MCF 10A (cell line): ENCODE measurements at regions of chr6 and their contacts with region 1.

Region 1: DNA sequence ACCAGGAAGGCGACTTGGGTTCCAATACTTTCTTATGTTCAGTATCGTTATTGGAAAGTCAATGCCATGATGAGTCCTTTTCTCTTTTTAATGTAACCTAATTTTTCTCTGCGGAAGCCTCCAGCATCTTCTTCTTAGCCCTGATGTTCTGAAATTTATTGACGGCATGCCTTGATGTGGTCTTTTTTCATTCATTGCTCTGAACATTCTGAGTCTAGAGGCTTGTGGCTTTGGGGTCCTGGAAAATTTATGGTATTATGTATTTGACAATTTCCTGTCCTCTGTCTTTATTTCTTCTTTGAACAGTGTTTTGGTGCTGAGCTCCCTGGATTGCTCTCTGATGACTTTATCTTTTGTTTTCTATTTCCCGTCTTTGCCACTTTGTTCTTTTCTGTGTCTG is 28.7 kb upstream of the MAS1 start:
- DNase-seq: no peak
- H3K4me3 Mint-ChIP-seq: no peak overlapping the region
- H3K27ac Mint-ChIP-seq: no peak overlapping the region
- H3K4me1 Mint-ChIP-seq: no peaks in the 10 kb centered on the region
- H3K27me3 Mint-ChIP-seq: no peaks in the 10 kb centered on the region
- CTCF ChIP-seq: no peak

Region 2: DNA sequence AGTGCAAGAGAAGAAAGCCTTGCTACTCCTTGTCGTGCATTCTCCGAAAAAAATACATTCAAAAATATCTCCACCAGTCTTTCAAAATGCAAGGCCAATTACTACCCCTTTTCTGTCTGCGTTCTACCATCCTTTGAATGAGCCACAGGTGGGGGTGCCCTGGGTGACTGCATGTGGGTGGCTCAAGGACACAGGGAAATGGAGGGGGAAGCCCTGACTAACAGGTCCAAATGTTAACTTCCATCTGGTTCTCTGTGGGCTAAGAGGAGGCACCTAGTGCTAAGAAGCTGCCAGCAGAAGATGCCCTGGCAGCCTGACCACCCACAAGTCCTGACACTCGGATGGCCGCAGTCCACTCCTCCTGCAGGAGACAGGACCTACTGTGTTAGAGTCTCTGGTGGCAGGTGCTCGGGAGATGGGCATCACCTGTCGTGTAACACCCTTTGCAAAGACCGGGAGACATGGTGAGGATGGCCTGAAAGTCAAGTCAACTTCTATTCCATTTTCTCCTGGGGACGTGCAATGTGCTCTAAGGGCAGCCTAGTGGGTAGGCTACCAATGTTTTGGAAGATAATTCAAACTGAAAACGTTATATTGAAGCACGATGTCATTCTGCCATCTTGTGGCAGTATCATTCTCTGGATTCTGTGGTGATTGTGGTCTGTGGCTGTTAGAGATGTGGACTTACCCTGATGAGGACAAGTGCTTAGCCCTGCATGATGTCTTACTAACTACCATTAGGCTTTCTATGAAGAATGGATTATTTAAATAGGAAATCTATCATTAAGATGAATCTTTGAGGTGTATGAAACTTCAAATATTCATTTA is 79.4 kb after region 1 on chr6:
- CTCF ChIA-PET with region 1: interaction called, 153 read pairs
- POLR2A ChIA-PET with region 1: interaction called, 7 read pairs
- intact Hi-C with region 1: loop called (anchors 1 kb)
- DNase-seq: peak; percentile 58
- H3K4me3 Mint-ChIP-seq: no peak overlapping the region
- H3K27ac Mint-ChIP-seq: no peak overlapping the region
- H3K4me1 Mint-ChIP-seq: peaks cover 13% of the 10 kb centered on the region
- H3K27me3 Mint-ChIP-seq: no peaks in the 10 kb centered on the region
- CTCF ChIP-seq: peak; percentile 51

Region 3: GRCh38 chr6:160088069-160088783 is 226.1 kb after region 1 on chr6:
- CTCF ChIA-PET with region 1: interaction called, 6 read pairs
- POLR2A ChIA-PET with region 1: no interaction called
- intact Hi-C with region 1: loop called (anchors 1 kb)
- DNase-seq: peak; percentile 76
- H3K4me3 Mint-ChIP-seq: no peak overlapping the region
- H3K27ac Mint-ChIP-seq: no peak overlapping the region
- H3K4me1 Mint-ChIP-seq: no peaks in the 10 kb centered on the region
- H3K27me3 Mint-ChIP-seq: no peaks in the 10 kb centered on the region
- CTCF ChIP-seq: peak; percentile 68

Region 4: DNA sequence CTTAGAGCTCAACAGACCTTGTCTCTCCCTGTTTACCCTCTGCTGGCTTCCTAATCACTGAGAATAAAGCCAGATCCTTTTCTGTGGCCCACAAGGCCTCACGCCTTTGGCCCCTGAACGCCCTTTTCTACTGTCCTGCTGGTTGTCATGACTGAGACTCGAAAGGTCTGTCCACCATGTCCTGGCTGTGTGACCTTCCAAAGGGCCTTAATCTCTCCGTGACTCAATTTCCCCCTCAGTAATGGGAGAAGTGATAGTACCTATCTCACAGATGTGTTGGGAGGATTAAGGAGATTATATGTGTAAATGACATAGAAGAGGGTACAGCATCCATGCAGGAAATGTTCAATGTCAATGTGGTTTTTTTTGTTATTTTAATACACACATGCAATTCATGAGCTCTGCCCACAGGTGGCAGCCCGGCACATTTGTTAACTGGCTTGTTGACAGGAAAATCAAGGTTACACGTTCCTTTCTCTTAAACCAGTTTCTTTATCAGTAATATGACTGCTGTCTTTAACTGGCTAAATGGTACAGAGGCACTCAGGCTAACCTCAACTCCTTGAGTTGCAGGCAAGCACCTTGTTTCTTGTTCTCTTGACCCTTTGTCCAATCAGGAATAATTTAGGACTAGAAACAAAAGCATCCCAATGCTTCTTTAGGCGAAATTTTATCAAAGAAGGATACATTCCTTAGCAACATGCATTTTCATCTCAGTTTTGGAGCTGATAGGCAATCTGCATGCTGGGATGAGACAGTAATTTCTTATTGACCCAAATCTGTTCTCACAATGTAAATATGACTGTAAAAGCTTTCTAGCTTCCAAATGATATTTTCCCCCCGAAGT is 276.1 kb after region 1 on chr6:
- CTCF ChIA-PET with region 1: interaction called, 6 read pairs
- POLR2A ChIA-PET with region 1: no interaction called
- intact Hi-C with region 1: loop called (anchors 1 kb)
- DNase-seq: peak; percentile 73
- H3K4me3 Mint-ChIP-seq: no peak overlapping the region
- H3K27ac Mint-ChIP-seq: no peak overlapping the region
- H3K4me1 Mint-ChIP-seq: peaks cover 25% of the 10 kb centered on the region
- H3K27me3 Mint-ChIP-seq: no peaks in the 10 kb centered on the region
- CTCF ChIP-seq: peak; percentile 80

Region 5: GRCh38 chr6:160534050-160534696 is 672.1 kb after region 1 on chr6:
- CTCF ChIA-PET with region 1: interaction called, 4 read pairs
- POLR2A ChIA-PET with region 1: no interaction called
- intact Hi-C with region 1: loop called (anchors 1 kb)
- DNase-seq: peak; percentile 64
- H3K4me3 Mint-ChIP-seq: no peak overlapping the region
- H3K27ac Mint-ChIP-seq: no peak overlapping the region
- H3K4me1 Mint-ChIP-seq: no peaks in the 10 kb centered on the region
- H3K27me3 Mint-ChIP-seq: no peaks in the 10 kb centered on the region
- CTCF ChIP-seq: peak; percentile 95